Adrenal gland (tissue), 19 donors: ENCODE measurements at regions of chr12 and their contacts with region 1.

Region 1: DNA sequence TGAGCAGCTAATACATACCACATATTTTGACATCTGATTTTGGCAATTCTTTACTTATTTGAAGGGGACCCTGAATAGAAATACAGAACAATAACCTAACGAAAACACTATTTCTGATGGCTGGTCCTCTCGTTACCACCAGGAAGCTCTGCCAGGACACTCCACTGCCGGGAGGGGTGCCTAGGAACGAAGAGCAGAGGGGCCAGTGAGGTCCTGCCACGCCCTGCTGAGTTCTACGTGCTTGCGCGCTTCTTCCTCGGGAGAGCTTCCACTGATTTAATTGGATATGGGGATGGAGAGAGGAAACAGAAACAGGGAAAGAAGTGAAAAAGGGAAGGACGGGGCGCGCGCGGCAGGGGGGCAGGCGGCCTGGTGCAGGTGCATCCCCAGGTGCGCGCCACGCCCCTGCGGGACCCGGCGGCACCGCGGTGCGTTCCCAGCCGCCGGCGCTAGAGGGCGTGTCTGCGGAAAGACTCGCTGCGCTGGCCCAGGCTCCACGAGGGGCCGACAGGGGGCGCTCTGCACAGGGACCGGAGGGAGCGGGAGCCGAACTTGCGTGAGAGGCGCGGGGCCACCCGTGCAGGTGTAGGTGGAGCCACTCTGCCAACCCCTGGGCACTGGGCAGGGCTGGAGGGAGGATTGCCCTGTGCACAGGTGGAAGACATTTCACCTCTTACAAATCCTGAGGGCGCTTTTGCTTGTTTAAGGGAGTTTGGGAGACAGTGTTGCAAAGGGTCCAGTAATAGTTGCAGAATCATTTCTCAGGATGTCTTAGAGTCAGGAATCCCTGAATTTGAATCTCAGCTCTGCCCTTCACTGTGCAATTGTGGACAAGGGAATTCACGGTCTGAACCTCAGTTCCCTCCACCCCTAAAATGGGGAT is 986.3 kb upstream of the TMEM132C start:
- DNase-seq: peak; percentile 43 to 68 (median 58)
- H3K4me3 ChIP-seq: no peak overlapping the region
- H3K27ac ChIP-seq: no peak overlapping the region
- H3K4me1 ChIP-seq: no peaks in the 10 kb centered on the region
- H3K27me3 ChIP-seq: peaks cover 7% of the 10 kb centered on the region
- CTCF ChIP-seq: peak; percentile 69 to 95 (median 79)
- POLR2A ChIP-seq: no peak

Region 2: GRCh38 chr12:127381048-127381668 is 100.5 kb after region 1 on chr12:
- intact Hi-C with region 1: no loop called
- DNase-seq: peak in 5 of 7 donors; percentile 14 to 42 (median 25)
- H3K4me3 ChIP-seq: peak overlapping the region in 1 of 4 donors; percentile 33
- H3K27ac ChIP-seq: no peak overlapping the region
- H3K4me1 ChIP-seq: no peaks in the 10 kb centered on the region
- H3K27me3 ChIP-seq: no peaks in the 10 kb centered on the region
- CTCF ChIP-seq: peak; percentile 49 to 86 (median 62)
- POLR2A ChIP-seq: no peak

Region 3: GRCh38 chr12:128069359-128069997 is 788.8 kb after region 1 on chr12:
- intact Hi-C with region 1: loop called in 1 of 2 experiments (anchors 10 kb)
- DNase-seq: peak; percentile 33 to 77 (median 62)
- H3K4me3 ChIP-seq: no peak overlapping the region
- H3K27ac ChIP-seq: no peak overlapping the region
- H3K4me1 ChIP-seq: no peaks in the 10 kb centered on the region
- H3K27me3 ChIP-seq: no peaks in the 10 kb centered on the region
- CTCF ChIP-seq: peak; percentile 72 to 79 (median 74)
- POLR2A ChIP-seq: no peak